Activated naive CD4-positive, alpha-beta T cell treated with anti-CD3 and anti-CD28 coated beads for 36 hours (primary cell): ENCODE measurements at regions of chr10 and their contacts with region 1.

Region 1: DNA sequence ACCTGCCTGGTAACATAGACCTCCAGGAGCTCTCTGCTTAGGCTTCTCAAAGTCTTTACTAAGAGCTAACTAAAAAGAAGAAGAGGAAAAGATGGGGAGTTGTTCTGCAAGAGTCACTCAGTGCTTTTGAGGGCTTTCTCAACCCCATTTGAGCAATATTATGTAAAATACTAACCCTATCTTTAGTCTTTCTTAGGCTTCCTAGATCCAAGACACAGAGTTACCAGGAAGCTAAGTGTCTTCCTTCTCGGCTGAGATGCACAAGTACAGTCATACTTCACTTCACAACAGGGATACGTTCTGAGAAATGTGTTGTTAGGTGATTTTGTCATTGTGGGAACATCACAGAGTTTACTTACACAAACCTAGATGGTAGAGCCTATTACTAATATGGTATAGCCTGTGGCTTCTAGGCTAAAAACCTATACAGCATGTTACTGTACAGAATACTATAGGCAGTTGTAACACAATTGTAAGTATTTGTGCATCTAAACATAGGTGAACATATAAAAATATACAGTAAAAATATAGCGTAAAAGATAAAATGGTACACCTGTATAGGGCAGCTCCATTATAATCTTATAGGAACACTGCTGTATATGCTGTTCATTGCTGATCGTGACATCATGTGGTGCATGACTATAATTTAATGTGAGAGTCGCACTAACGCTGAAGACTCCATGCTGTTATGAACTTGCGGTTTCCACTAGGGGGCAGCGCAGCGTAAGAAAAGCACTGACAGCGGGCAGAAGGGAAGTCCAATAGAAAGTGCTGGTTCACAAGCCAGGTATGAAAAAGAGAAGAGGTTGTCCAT is 16.3 kb downstream of the ANKRD22 start:
- DNase-seq: peak; percentile 95
- H3K4me3 Mint-ChIP-seq: no peak overlapping the region
- H3K27ac Mint-ChIP-seq: no peak overlapping the region
- H3K4me1 Mint-ChIP-seq: peaks cover 20% of the 10 kb centered on the region
- H3K27me3 Mint-ChIP-seq: no peaks in the 10 kb centered on the region

Region 2: GRCh38 chr10:88687853-88688467 is 147.3 kb before region 1 on chr10:
- CTCF ChIA-PET with region 1: interaction called, 4 read pairs
- intact Hi-C with region 1: loop called (anchors 1 kb)
- DNase-seq: no peak
- H3K4me3 Mint-ChIP-seq: no peak overlapping the region
- H3K27ac Mint-ChIP-seq: no peak overlapping the region
- H3K4me1 Mint-ChIP-seq: no peaks in the 10 kb centered on the region
- H3K27me3 Mint-ChIP-seq: peaks cover 8% of the 10 kb centered on the region

Region 3: DNA sequence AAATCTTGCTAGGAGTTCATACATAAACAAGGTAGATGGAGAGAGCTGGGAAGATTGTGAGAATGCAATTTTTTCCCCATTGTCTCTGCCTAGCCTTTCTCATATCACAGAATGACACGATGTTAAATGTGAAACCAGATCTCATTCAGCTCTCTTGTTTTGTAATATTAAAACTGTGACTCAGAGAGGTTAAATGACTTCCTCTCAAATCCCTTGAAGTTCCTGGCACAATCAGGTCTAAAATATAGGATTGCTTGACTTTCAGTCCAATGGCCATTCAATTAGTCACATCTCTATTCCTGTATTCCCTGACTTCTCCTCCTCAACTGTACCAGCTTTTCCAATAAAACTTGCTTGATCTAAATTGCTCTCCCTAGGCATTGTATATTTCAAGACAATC is 13.2 kb after region 1 on chr10:
- CTCF ChIA-PET with region 1: interaction called, 34 read pairs
- intact Hi-C with region 1: loop called (anchors 1 kb)
- DNase-seq: no peak
- H3K4me3 Mint-ChIP-seq: no peak overlapping the region
- H3K27ac Mint-ChIP-seq: peak overlapping the region; percentile 25
- H3K4me1 Mint-ChIP-seq: peaks cover 13% of the 10 kb centered on the region
- H3K27me3 Mint-ChIP-seq: peaks cover 12% of the 10 kb centered on the region

Region 4: GRCh38 chr10:88865281-88865876 is 30.1 kb after region 1 on chr10:
- CTCF ChIA-PET with region 1: interaction called, 16 read pairs
- intact Hi-C with region 1: loop called (anchors 1 kb)
- DNase-seq: no peak
- H3K4me3 Mint-ChIP-seq: no peak overlapping the region
- H3K27ac Mint-ChIP-seq: no peak overlapping the region
- H3K4me1 Mint-ChIP-seq: no peaks in the 10 kb centered on the region
- H3K27me3 Mint-ChIP-seq: peaks cover 15% of the 10 kb centered on the region

Region 5: GRCh38 chr10:88886557-88886956 is 51.3 kb after region 1 on chr10:
- CTCF ChIA-PET with region 1: interaction called, 26 read pairs
- intact Hi-C with region 1: no loop called
- DNase-seq: peak; percentile 53
- H3K4me3 Mint-ChIP-seq: no peak overlapping the region
- H3K27ac Mint-ChIP-seq: no peak overlapping the region
- H3K4me1 Mint-ChIP-seq: peaks cover 78% of the 10 kb centered on the region
- H3K27me3 Mint-ChIP-seq: no peaks in the 10 kb centered on the region

Region 6: DNA sequence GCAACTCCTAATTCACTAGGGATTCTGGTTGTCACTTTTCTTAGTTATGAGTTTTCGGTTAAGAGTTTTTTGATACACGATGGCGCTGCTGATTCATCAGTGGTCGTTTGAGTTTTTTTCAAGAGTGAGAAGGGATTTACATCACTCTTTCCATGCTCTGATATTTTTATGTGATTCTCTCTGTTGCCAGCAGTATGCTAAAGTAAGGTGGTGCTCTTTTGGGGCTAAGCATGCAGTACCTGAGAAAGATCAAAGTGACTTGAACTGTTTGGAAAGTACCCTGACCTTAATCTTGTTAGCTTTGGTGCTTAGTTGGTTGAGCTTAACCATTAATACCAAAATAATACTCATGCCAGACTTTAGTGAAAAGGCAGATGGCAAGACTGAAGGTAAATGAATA is 72.9 kb after region 1 on chr10:
- CTCF ChIA-PET with region 1: interaction called, 32 read pairs
- intact Hi-C with region 1: no loop called
- DNase-seq: peak; percentile 44
- H3K4me3 Mint-ChIP-seq: no peak overlapping the region
- H3K27ac Mint-ChIP-seq: peak overlapping the region; percentile 25
- H3K4me1 Mint-ChIP-seq: peaks cover 20% of the 10 kb centered on the region
- H3K27me3 Mint-ChIP-seq: no peaks in the 10 kb centered on the region

Region 7: GRCh38 chr10:89217057-89217990 is 382.0 kb after region 1 on chr10:
- CTCF ChIA-PET with region 1: interaction called, 16 read pairs
- intact Hi-C with region 1: loop called (anchors 1 kb)
- DNase-seq: peak; percentile 81
- H3K4me3 Mint-ChIP-seq: no peak overlapping the region
- H3K27ac Mint-ChIP-seq: no peak overlapping the region
- H3K4me1 Mint-ChIP-seq: peaks cover 7% of the 10 kb centered on the region
- H3K27me3 Mint-ChIP-seq: peaks cover 2% of the 10 kb centered on the region